Activated naive CD4-positive, alpha-beta T cell treated with anti-CD3 and anti-CD28 coated beads, Interleukin-2, amount 10 ng/mL, durations not matched to agents 7 days and 5 days (primary cell): ENCODE measurements at regions of chr3 and their contacts with region 1.

Region 1: GRCh38 chr3:51445544-51446280 is 54.1 kb downstream of the DCAF1 start:
- DNase-seq: no peak
- H3K4me3 Mint-ChIP-seq: no peak overlapping the region
- H3K27ac Mint-ChIP-seq: no peak overlapping the region
- H3K4me1 Mint-ChIP-seq: peaks cover 23% of the 10 kb centered on the region
- H3K27me3 Mint-ChIP-seq: no peaks in the 10 kb centered on the region

Region 2: GRCh38 chr3:51434746-51435327 is 10.9 kb before region 1 on chr3:
- CTCF ChIA-PET with region 1: interaction called, 13 read pairs
- DNase-seq: peak; percentile 68
- H3K4me3 Mint-ChIP-seq: no peak overlapping the region
- H3K27ac Mint-ChIP-seq: no peak overlapping the region
- H3K4me1 Mint-ChIP-seq: no peaks in the 10 kb centered on the region
- H3K27me3 Mint-ChIP-seq: no peaks in the 10 kb centered on the region